ENCODE measurements at regions of chr5 and their contacts with region 1.

Region 1: GRCh38 chr5:83718195-83718825 is 2.3 kb downstream of the HAPLN1 start:
- DNase-seq: no peak
- ATAC-seq: peak; percentile 71
- H3K4me3 ChIP-seq: no peak overlapping the region
- H3K27ac ChIP-seq: no peak overlapping the region
- H3K4me1 ChIP-seq: no peaks in the 10 kb centered on the region
- H3K27me3 ChIP-seq: no peaks in the 10 kb centered on the region

Region 2: DNA sequence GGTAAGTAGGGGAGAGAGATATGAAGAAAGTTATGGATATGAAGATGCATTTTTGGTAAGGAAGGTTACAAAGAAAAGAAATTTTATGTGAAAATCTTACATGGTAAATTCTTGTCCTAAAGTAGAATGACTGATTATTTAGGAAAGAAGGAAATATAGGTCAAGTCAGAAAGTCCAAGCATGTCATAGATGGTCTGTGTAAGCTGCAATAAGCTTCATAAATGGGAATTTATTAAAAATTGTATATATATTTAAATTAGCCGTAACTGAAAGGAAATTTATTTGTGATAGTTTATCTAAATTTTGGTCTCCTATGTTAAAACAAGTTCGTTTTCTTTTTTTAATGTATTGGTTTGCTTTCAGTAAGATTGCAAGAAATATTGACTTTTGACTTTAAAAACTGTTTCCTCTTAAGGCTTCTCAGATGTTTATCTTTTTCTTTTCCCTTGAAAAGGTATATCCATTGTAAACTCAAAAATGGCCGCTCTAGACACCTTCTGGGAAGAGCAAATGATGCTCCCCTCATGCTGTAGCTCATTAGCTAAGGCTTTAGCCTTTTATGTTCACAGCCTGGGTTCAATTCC is 49.2 kb after region 1 on chr5:
- intact Hi-C with region 1: no loop called
- DNase-seq: no peak
- ATAC-seq: no peak
- H3K4me3 ChIP-seq: no peak overlapping the region
- H3K27ac ChIP-seq: no peak overlapping the region
- H3K4me1 ChIP-seq: no peaks in the 10 kb centered on the region
- H3K27me3 ChIP-seq: no peaks in the 10 kb centered on the region

Region 3: DNA sequence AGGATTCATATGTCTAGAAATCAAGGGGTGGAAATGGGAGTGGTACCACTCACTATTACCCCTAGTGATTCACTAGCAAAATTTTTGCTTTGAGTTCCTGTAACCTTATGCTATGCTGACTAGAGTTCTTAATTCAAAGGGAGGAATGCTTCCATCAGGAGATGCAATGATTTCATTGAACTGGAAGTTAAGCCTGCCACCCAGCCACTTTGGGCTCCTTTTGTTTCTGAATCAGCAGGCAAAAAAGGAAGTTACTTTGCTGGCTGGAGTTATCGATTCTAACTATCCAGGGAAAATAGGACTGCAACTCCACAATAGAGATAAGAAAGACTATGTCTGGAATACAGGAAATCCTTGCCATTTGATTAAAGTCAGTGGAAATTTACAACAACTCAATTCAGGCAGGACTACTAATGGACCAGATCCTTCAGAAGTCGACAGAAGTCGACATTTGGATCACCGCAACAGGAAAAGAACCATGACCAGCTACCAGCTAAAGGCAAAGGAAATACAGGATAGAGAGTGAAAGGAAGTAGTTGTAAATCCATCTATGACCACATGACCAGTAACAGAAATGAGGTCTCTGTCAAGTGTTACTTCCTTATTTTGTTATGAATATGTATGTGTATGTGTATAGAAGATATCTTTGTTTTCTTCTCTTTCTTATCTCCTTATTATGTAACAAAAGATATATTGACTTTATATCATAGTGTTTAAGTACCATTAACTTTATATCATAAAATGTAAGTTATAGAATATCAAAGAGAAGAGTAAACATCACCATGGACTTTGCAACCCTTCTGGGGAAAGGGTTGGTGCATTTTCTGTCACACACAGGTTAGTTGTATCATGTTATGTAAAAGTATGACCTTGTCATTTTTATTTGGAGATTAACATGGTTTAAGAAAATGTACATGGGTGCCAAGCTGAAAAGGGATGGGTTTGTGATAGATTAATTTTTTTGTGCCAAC is 201.0 kb after region 1 on chr5:
- intact Hi-C with region 1: loop called in 1 of 2 experiments (anchors 5 kb)
- DNase-seq: no peak
- ATAC-seq: no peak
- H3K4me3 ChIP-seq: no peak overlapping the region
- H3K27ac ChIP-seq: no peak overlapping the region
- H3K4me1 ChIP-seq: peaks cover 0 to 6% of the 10 kb centered on the region in 2 donors
- H3K27me3 ChIP-seq: no peaks in the 10 kb centered on the region

Region 4: GRCh38 chr5:84239505-84239904 is 521.2 kb after region 1 on chr5:
- intact Hi-C with region 1: loop called in 1 of 2 experiments (anchors 10 kb)
- DNase-seq: no peak
- ATAC-seq: no peak
- H3K4me3 ChIP-seq: no peak overlapping the region
- H3K27ac ChIP-seq: no peak overlapping the region
- H3K4me1 ChIP-seq: no peaks in the 10 kb centered on the region
- H3K27me3 ChIP-seq: no peaks in the 10 kb centered on the region

Region 5: DNA sequence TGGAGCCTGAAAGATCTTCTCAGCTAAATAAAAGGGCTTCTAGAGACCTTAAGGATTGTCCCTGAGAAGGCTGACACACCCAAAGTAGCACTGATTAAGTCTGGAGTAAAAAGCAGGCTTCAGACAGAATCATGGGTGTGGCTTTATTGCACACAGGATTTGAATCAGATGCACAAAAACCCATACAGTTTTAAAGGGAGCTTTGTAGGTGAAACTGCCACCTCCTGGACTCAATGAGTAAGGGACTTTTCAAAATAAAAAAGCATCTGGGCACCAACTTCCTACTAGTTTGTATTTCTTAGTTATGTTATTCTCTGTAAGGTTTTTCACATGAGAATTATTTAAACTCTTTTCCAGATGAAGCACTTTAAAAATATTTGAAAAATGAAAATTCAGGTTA is 537.0 kb after region 1 on chr5:
- intact Hi-C with region 1: loop called in 1 of 2 experiments (anchors 10 kb)
- DNase-seq: no peak
- ATAC-seq: no peak
- H3K4me3 ChIP-seq: no peak overlapping the region
- H3K27ac ChIP-seq: no peak overlapping the region
- H3K4me1 ChIP-seq: no peaks in the 10 kb centered on the region
- H3K27me3 ChIP-seq: no peaks in the 10 kb centered on the region

Region 6: GRCh38 chr5:84382363-84383295 is 664.3 kb after region 1 on chr5:
- intact Hi-C with region 1: loop called in 1 of 2 experiments (anchors 5 kb)
- DNase-seq: peak; percentile 57 to 81
- ATAC-seq: peak; percentile 65
- H3K4me3 ChIP-seq: peak overlapping the region; percentile 67 to 93
- H3K27ac ChIP-seq: peak overlapping the region; percentile 37 to 89
- H3K4me1 ChIP-seq: peaks cover 0 to 3% of the 10 kb centered on the region in 2 donors
- H3K27me3 ChIP-seq: no peaks in the 10 kb centered on the region

Measured in aorta (tissue), 5 donors.